ENCODE measurements at regions of chr17 and their contacts with region 1.

Region 1: GRCh38 chr17:44812263-44812662 is 17.8 kb downstream of the GJC1 start:
- DNase-seq: no peak
- H3K4me3 ChIP-seq: no peak overlapping the region
- H3K27ac ChIP-seq: peak overlapping the region; percentile 51 to 82 (median 70)
- H3K4me1 ChIP-seq: peaks cover 0 to 11% (median 1%) of the 10 kb centered on the region in 4 donors
- H3K27me3 ChIP-seq: no peaks in the 10 kb centered on the region
- CTCF ChIP-seq: no peak
- EP300 ChIP-seq: no peak
- POLR2A ChIP-seq: no peak

Region 2: DNA sequence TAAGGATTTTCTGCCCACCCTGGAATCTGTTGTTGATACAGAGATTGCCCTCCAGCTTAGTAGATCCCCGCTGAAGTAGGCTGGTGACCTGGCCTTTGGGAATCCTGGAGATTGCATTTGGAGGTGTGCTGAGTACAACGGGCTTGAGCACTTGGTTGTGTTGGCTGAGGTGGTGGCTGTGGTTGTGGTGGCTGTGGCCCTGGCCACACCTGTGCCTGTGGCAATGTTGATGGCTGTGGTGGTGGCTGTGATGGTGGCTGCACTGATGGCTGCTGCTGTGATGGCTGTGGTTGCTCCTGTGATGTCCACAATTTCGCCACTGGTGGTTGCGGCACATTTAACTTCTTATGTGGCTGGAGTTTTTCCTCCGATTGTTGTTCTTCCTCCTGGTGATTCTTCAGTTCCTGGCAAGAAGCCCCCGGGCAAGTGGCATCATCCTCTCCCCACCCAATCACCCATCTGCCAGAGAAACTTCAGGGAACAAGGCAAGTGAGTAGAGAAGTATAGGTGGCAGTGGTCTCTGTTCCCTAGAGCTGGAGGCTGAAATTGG is 1588.0 kb before region 1 on chr17:
- in situ Hi-C with region 1: no loop called
- intact Hi-C with region 1: no loop called
- DNase-seq: no peak
- H3K4me3 ChIP-seq: no peak overlapping the region
- H3K27ac ChIP-seq: no peak overlapping the region
- H3K4me1 ChIP-seq: no peaks in the 10 kb centered on the region
- H3K27me3 ChIP-seq: no peaks in the 10 kb centered on the region
- CTCF ChIP-seq: no peak
- EP300 ChIP-seq: no peak
- POLR2A ChIP-seq: no peak

Region 3: GRCh38 chr17:45293413-45294211 is 481.3 kb after region 1 on chr17:
- in situ Hi-C with region 1: no loop called
- intact Hi-C with region 1: loop called (anchors 10 kb)
- DNase-seq: peak; percentile 80
- H3K4me3 ChIP-seq: no peak overlapping the region
- H3K27ac ChIP-seq: peak overlapping the region; percentile 85 to 89 (median 86)
- H3K4me1 ChIP-seq: peaks cover 85 to 100% (median 89%) of the 10 kb centered on the region in 4 donors
- H3K27me3 ChIP-seq: no peaks in the 10 kb centered on the region
- CTCF ChIP-seq: peak in 1 of 5 experiments; percentile 2
- EP300 ChIP-seq: no peak
- POLR2A ChIP-seq: no peak

Measured in transverse colon (tissue), 4 donors.